Mammary epithelial cell (primary cell): ENCODE measurements at regions of chr15 and their contacts with region 1.

Region 1: GRCh38 chr15:72933976-72934375 is 118.3 kb upstream of the NEO1 start:
- DNase-seq: peak; percentile 36
- H3K4me3 ChIP-seq: no peak overlapping the region
- H3K27ac ChIP-seq: no peak overlapping the region
- H3K4me1 ChIP-seq: no peaks in the 10 kb centered on the region
- H3K27me3 ChIP-seq: no peaks in the 10 kb centered on the region
- CTCF ChIP-seq: no peak

Region 2: DNA sequence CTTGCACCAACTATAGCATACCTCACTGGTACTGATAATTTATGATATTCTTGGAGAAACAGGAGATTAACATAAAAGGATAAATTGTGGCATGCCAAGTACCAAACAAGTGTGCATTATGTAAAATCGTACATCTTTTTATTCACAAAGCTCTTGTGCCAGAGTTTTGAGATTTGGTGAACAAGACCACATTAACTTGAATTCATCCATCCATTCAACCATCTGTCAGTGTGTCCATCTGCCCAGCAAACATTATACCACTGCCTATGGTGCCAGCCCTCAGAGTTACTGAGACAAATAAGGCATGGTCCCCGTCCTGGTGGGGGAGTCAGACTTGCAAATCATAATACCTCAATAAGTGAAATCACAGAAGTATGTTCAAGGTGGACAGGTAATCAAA is 101.2 kb after region 1 on chr15:
- CTCF ChIA-PET with region 1: no interaction called
- dilution Hi-C with region 1: loop called (anchors 5 kb)
- in situ Hi-C with region 1: no loop called
- intact Hi-C with region 1: no loop called
- DNase-seq: no peak
- H3K4me3 ChIP-seq: no peak overlapping the region
- H3K27ac ChIP-seq: no peak overlapping the region
- H3K4me1 ChIP-seq: no peaks in the 10 kb centered on the region
- H3K27me3 ChIP-seq: peaks cover 7% of the 10 kb centered on the region
- CTCF ChIP-seq: no peak

Region 3: DNA sequence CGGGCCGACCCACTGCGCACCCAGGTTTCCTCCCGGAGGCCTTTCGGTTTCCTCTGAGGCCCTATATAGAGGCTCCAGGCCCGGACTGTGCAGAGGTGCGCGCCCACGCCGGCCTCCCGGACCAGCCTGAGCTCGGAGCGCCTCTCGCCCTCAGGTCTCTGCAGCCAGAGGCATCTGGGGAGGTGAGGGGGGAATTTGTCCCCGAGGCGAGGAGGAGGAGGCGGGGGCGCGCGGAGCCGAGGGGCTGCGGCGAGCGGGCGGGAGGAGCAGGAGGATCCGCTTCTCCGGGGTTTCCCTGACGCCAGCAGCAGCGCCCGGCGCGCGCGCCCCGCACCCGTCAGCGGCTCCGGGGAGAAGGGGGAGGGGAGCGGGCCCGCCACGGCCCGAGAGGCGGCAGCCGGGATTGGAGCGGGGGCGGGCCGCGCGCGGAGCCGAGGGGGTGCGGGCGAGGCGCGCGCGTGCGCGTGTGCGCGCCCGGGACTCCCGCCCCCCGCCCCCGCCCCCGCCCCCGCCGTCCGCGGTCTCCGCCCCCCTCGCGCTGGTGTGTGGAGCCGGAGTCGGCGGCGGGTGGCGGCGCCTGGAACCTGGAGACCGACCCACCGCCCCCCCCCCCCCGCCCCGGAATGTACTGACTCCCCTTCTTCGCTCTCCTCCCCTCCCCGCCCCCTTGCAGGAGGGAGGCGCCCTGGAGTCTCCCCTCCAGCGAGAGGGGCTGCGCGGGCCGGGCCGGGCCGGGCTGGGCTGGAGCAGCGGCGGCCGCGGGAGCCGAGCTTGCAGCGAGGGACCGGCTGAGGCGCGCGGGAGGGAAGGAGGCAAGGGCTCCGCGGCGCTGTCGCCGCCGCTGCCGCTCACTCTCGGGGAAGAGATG is 118.1 kb after region 1 on chr15 and contains the start of gene NEO1:
- CTCF ChIA-PET with region 1: no interaction called
- dilution Hi-C with region 1: no loop called
- in situ Hi-C with region 1: no loop called
- intact Hi-C with region 1: no loop called
- DNase-seq: peak; percentile 78
- H3K4me3 ChIP-seq: peak within 1 kb of the TSS; percentile 88 to 97 (median 88)
- H3K27ac ChIP-seq: no peak within 1 kb of the TSS
- H3K4me1 ChIP-seq: peaks cover 13% of the 10 kb centered on the region
- H3K27me3 ChIP-seq: no peaks in the 10 kb centered on the region
- CTCF ChIP-seq: no peak
- total RNA-seq, gene NEO1: 17.0 to 23.3 TPM